Ascending aorta (tissue), 2 donors: ENCODE measurements at regions of chr16 and their contacts with region 1.

Region 1: DNA sequence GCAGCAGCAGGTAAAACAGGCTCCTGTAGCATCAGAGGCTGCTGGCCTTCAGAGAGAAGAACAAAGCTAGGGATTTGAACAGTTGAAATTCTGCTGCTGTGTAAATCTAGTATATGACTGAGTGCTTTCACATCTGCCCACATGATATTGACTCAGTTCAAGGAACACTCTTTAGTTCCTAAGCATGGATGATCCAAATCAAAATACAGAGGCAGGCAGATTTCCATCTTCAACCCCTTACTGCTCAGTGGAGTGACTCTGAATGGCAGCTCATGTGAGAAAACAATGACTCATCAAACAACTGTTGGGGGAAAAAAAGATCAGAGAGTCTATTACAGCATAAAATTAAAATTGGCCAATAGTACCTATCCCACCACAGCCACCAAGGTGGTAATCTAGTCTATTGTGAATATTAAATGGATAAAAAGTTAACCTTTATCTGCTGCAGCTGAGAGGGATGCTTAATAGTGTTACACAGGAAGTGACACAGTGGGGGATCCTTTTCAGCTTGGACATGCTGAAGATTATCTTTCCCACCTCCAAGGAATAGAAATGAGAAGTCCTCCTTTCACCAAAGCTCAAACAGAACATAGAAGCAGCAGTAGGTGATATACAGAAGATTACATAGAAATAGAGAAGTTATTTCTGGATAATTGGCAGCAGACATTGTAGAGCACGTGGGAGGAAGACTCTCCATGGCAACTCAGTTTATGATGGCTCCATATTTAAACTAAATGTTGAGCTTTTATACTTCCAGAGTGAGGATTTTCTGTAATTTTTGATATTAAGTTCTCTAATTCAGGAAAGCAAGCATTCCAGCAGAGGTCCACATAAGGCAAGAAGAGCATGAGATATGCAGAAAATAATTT is 239.7 kb upstream of the ERCC4 start:
- DNase-seq: no peak
- H3K4me3 ChIP-seq: no peak overlapping the region
- H3K27ac ChIP-seq: no peak overlapping the region
- H3K4me1 ChIP-seq: no peaks in the 10 kb centered on the region
- H3K27me3 ChIP-seq: no peaks in the 10 kb centered on the region
- CTCF ChIP-seq: no peak

Region 2: DNA sequence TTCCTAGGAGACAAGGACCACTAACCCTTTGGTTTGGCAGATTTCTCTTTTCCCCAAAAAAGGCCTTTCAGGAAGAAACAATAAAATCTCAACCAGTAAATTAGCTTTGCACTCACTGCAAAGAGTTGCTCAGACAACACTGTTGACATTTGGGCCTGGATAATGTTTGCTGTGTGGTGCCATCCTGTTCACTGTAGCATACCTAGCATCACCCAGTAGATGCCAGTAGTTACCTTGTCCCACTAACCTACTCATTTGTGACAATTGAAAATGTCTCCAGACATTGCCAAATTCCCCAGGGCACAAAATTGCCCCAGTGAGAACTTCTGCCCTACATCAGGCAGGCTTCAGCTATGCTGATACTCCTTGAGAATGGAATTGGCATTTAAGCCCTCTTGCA is 62.7 kb after region 1 on chr16:
- intact Hi-C with region 1: loop called (anchors 10 kb)
- DNase-seq: no peak
- H3K4me3 ChIP-seq: no peak overlapping the region
- H3K27ac ChIP-seq: no peak overlapping the region
- H3K4me1 ChIP-seq: no peaks in the 10 kb centered on the region
- H3K27me3 ChIP-seq: no peaks in the 10 kb centered on the region
- CTCF ChIP-seq: no peak